ENCODE measurements at regions of chr6 and their contacts with region 1.

Region 1: GRCh38 chr6:81752138-81752920 is at the start of gene TENT5A:
- H3K4me3 Mint-ChIP-seq: peak within 1 kb of the TSS; percentile 87
- H3K27ac Mint-ChIP-seq: peak within 1 kb of the TSS; percentile 98
- H3K4me1 Mint-ChIP-seq: peaks cover 50% of the 10 kb centered on the region
- H3K27me3 Mint-ChIP-seq: no peaks in the 10 kb centered on the region

Region 2: DNA sequence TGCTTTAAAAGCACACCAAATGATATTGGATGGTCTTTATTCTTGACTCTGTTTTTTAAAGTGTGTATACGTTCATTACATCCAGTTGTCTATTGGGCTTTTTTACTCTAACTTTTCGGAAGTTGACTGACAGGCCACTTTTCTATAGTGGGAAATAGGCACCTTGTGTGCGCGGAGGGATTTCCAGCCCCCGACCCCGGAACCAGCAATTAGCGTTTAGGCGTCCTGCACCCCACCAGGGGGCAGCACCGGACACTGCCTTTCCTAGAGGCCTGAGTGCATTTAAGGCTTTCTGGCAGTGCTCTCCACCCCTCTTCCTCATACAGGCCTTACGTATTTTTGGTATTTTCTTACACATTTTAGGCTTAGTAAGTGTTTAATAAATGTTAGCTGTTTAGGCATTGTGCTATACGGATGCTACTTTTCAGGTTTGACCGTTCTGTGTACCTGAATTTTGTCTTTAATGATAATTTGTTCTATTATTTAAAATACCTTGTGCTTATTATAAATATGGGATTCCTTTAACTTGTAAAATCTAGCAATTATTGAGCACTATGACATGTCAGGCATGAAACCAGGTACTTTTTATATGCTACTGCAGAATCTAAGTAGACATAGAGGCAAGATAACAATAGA is 1414.0 kb before region 1 on chr6:
- intact Hi-C with region 1: loop called (anchors 10 kb)
- H3K4me3 Mint-ChIP-seq: no peak overlapping the region
- H3K27ac Mint-ChIP-seq: no peak overlapping the region
- H3K4me1 Mint-ChIP-seq: peaks cover 5% of the 10 kb centered on the region
- H3K27me3 Mint-ChIP-seq: no peaks in the 10 kb centered on the region

Region 3: DNA sequence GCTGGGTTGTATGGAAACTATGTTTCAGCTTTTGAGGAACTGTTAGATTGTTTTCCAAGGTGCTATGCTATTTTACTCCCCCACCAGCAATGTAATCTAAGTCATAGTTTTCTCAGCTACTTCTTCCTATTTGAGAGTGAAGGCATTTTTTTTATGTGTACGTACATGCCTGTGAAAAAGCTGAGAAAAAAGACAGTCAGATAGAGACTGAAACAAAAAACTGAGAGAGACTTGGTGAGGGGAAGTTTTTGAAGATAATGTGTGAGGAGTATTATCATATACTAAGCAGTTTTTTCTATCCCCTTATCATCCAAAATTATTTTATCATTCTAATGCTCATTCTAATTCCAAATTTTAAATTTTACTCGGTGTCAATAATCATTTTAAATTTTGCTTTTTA is 865.9 kb before region 1 on chr6:
- intact Hi-C with region 1: no loop called
- H3K4me3 Mint-ChIP-seq: no peak overlapping the region
- H3K27ac Mint-ChIP-seq: no peak overlapping the region
- H3K4me1 Mint-ChIP-seq: no peaks in the 10 kb centered on the region
- H3K27me3 Mint-ChIP-seq: no peaks in the 10 kb centered on the region

Region 4: DNA sequence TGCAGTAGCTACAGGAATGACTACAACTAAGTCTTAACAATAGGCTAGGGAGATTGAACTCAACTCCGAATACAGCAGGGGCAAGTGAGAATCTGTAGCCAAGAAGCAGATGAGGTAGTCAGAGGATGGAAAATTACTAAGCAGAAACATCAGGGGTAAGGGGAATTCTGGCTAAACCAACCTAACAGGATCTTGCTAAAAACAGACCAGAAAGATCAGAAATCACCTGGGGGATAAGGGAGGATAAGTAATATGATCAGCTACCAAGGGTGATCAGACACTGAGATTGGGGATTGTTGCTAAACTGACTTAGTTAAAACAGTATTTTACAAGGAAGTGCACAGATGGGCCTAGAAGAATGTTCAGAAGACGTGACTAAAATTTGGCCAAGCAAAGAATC is 217.3 kb before region 1 on chr6:
- intact Hi-C with region 1: no loop called
- H3K4me3 Mint-ChIP-seq: no peak overlapping the region
- H3K27ac Mint-ChIP-seq: no peak overlapping the region
- H3K4me1 Mint-ChIP-seq: no peaks in the 10 kb centered on the region
- H3K27me3 Mint-ChIP-seq: no peaks in the 10 kb centered on the region

Region 5: GRCh38 chr6:81614292-81614691 is 138.0 kb before region 1 on chr6:
- intact Hi-C with region 1: no loop called
- H3K4me3 Mint-ChIP-seq: no peak overlapping the region
- H3K27ac Mint-ChIP-seq: no peak overlapping the region
- H3K4me1 Mint-ChIP-seq: peaks cover 6% of the 10 kb centered on the region
- H3K27me3 Mint-ChIP-seq: no peaks in the 10 kb centered on the region

Region 6: DNA sequence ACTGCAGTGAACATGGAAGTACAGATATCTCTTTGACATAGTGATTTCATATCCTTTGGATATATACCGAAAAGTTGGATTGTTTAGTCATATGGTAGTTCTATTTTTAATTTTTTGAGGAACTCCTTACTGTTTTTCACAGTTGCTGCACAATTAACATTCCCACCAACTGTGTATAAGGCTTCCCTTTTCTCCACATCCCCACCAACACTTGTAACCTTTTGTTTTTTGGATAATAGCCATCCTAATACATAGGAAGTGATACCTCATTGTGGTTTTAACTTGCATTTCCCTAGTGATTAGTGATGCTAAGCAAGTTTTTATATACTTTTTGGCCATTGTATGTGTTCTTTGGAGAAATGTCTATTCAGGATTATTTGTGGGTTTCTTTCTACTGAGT is 45.3 kb after region 1 on chr6:
- intact Hi-C with region 1: loop called (anchors 5 kb)
- H3K4me3 Mint-ChIP-seq: no peak overlapping the region
- H3K27ac Mint-ChIP-seq: no peak overlapping the region
- H3K4me1 Mint-ChIP-seq: peaks cover 32% of the 10 kb centered on the region
- H3K27me3 Mint-ChIP-seq: peaks cover 11% of the 10 kb centered on the region

Region 7: DNA sequence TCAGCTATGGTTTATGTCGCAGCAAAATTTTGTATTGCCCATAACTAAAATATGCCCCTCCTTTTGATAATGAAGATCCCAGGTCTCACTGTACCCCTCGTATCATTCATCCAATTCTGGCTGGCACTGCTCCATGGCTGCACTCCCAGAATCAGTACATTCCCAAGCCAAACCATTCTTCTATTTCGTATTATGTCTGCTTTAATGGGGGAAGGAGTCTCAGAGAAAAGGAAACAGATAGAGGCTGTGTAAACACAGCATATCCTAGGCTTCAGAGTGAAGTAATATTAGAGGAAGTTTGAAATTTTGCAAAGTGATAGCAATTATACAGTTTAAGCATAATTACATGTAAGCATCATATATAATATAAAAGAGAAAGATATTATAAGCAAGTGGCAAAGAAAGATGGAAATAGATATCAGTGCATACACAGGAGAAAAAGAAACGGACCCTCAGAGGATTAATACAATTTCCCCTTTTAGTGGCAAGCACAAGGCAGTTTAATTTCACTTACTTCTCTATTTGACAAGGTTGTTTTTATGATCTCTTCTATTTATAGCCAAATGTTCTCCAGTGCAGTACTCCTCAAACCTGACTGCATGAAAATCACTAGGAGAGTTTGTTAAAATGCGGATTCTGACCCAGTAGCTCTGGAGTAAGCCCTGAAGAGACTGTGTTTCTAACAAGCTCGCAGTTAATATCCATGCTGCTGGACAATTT is 56.7 kb after region 1 on chr6:
- intact Hi-C with region 1: no loop called
- H3K4me3 Mint-ChIP-seq: peak overlapping the region; percentile 39
- H3K27ac Mint-ChIP-seq: peak overlapping the region; percentile 78
- H3K4me1 Mint-ChIP-seq: peaks cover 48% of the 10 kb centered on the region
- H3K27me3 Mint-ChIP-seq: no peaks in the 10 kb centered on the region

Region 8: DNA sequence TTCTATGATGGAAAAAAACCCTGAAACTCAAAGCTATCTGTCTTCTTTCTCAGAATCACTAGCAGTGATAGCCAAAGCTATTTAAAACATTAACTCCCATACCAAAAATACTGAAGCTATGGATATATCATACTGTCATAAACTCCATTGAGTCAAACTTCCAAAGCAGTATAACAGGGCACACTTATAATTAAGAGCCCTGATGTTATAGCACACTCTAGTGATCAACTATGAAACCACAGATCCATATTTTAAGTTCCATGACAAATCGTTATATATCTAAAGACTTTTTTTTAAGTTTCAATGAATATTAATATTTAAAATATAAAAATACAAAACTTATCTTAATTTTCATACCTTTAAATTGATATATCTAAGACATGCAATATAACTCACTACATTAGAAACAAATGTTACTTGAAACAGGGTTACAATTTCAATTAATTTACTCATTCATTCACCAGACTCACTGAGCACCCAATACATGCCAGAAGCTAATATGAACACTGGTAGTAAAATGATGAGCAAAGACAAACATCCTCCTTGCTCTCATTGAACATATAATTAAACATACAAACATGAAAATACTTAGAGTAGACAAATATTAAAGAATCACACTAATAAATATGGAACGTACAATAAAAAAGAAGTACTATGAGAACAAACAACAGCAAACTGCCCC is 425.9 kb after region 1 on chr6:
- intact Hi-C with region 1: loop called (anchors 10 kb)
- H3K4me3 Mint-ChIP-seq: no peak overlapping the region
- H3K27ac Mint-ChIP-seq: no peak overlapping the region
- H3K4me1 Mint-ChIP-seq: no peaks in the 10 kb centered on the region
- H3K27me3 Mint-ChIP-seq: no peaks in the 10 kb centered on the region